ENCODE measurements at regions of chr10 and their contacts with region 1.

Region 1: DNA sequence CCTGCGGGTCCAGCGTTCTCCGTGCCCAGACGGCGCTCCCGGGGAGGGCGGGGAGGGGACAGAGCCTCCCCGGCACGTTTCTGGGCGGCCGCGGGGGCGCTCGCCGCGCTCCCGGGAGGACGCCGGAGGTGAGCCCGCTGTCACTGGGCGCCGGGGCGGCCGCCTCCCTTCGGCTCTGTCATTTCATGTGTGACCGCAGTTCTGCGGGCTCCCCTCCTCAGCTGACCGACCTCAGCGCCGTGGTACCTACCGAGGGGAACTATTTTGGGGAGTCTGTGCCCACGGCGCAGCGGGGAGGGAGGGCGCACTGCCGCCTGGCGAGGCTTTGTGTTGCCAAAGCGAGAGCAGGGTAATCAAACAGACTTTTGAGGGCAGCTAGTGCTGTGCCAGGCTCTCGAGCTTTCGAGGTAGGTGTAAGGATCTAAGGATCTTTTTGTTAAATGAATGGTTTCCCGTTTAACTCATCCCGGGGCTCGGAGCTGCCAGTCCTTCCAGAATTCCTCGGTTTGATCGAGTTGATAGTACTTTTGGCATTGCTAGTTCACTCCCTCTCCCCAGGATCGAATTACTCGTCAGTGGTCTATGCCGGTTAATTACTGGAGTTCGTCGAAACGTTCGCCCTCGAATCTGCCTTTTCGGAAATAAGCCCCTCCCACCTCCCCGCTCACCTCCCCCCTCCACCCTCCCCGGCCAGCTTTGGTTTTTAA is 1.9 kb downstream of the ARID5B start:
- DNase-seq: peak; percentile 75 to 88
- ATAC-seq: peak; percentile 80
- H3K4me3 ChIP-seq: peak overlapping the region; percentile 90 to 95
- H3K27ac ChIP-seq: peak overlapping the region; percentile 79 to 99
- H3K4me1 ChIP-seq: peaks cover 2 to 3% of the 10 kb centered on the region in 2 donors
- H3K27me3 ChIP-seq: no peaks in the 10 kb centered on the region

Region 2: DNA sequence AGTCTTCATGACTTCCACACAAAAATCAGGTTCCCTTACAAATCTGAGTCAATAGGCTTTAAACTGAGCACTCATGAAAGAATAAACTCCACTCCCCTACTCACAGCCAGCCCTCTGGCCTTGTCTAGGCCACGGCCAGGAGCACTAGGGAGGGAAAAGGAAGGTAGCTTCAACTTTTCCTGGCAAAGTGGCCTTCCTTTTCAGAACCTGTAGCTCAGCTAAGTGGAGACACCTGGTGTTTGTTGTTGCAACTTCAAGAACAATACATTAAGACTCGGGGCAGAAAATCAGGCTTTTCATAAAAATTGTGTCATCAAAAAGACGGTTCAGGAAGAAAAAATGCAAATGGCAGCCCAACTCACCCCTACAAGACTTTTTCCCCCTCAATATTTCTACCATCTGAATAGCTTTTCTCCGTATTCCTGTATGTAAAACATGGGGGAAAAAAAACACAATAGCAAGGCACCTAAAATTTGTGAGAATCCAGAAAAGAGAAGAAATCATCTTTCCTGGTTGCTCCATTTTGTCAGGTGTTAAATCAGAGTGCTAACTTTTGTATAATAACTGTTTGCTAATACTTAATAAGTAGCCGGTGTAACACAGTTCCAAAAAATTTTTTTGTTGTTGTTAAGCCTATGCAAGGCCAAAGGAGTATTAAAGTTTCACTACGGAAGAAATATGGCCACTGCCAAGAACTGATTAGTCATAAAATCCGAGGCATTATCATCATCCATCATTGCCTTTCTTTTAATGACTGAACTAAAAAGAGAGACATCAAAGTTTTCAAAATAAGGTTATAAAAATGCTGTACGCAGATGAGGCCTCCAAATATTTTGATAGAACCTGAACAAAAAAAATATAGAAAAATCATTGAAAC is 68.1 kb before region 1 on chr10:
- intact Hi-C with region 1: loop called (anchors 5 kb)
- DNase-seq: no peak
- ATAC-seq: peak; percentile 68
- H3K4me3 ChIP-seq: no peak overlapping the region
- H3K27ac ChIP-seq: peak overlapping the region; percentile 1 to 30
- H3K4me1 ChIP-seq: peaks cover 2 to 5% of the 10 kb centered on the region in 2 donors
- H3K27me3 ChIP-seq: no peaks in the 10 kb centered on the region

Region 3: DNA sequence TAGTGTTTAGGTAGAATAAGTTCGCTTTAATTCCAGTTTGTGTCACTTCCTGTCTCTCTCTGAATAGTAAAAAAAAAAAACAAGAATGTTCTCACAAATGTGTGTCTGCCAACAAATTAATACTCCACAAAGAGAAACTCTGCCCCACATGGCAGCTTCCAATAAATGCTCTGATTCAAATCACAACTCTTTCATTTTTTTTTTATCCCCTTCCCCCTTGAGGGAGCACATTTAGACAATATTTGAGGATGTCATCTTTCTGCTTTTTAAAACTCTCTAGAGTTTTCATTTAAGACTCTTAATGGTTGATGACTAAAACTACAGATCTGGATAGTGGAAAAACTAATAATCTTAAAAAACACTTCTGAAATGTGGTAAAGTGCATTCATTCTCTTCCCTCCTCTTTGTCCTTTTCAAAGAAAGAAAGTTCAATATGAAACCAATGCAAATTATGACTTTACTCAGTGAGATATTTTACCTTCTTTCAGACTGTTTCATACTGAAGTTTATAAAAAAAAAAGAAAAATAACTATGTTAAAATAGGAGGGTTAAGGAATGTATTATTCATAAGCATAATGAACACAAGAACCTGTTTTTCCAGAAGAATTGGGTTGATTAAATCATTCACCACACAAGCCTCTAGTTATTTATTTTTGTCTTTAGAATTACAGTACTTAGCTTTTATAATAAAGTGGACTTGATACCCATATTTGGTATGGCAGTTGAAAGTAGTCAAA is 40.5 kb after region 1 on chr10:
- intact Hi-C with region 1: loop called (anchors 2 to 5 kb)
- DNase-seq: no peak
- ATAC-seq: peak; percentile 63
- H3K4me3 ChIP-seq: no peak overlapping the region
- H3K27ac ChIP-seq: no peak overlapping the region
- H3K4me1 ChIP-seq: peaks cover 0 to 11% of the 10 kb centered on the region in 2 donors
- H3K27me3 ChIP-seq: no peaks in the 10 kb centered on the region

Region 4: DNA sequence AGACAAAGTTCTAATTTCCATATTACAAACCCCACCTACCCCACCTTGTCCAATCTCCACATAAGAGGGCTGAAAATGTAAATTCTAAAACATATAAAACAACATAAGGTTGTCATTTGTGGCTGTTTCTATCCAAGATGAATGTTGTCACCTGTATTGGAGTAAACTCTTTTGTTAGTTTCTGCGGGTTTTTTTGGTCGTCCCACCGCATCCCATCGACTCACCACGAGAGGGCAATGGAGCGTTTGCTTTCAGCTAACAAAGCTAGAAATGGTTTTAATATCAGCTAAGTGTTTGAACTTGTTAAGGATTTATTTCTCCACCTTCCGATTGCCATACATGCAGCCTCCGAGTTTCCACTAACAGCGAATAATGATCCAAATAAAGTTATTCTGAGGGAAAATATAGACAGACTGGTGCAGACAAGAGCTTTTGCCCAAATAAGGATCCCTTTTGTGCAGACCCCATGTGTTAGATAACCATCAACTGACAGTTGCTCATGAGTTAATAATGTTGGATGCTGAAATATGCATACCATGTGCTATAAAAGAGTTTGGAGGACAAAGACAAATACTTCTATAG is 135.3 kb after region 1 on chr10:
- intact Hi-C with region 1: loop called (anchors 5 kb)
- DNase-seq: peak; percentile 74 to 84
- ATAC-seq: peak; percentile 76
- H3K4me3 ChIP-seq: peak overlapping the region in 1 of 2 donors; percentile 26
- H3K27ac ChIP-seq: peak overlapping the region; percentile 44 to 64
- H3K4me1 ChIP-seq: peaks cover 5 to 8% of the 10 kb centered on the region in 2 donors
- H3K27me3 ChIP-seq: no peaks in the 10 kb centered on the region

Region 5: GRCh38 chr10:62231371-62231770 is 328.0 kb after region 1 on chr10:
- intact Hi-C with region 1: loop called in 1 of 2 experiments (anchors 2 kb)
- DNase-seq: no peak
- ATAC-seq: peak; percentile 78
- H3K4me3 ChIP-seq: no peak overlapping the region
- H3K27ac ChIP-seq: no peak overlapping the region
- H3K4me1 ChIP-seq: peaks cover 0 to 2% of the 10 kb centered on the region in 2 donors
- H3K27me3 ChIP-seq: no peaks in the 10 kb centered on the region